ENCODE measurements at regions of chrX and their contacts with region 1.

Region 1: DNA sequence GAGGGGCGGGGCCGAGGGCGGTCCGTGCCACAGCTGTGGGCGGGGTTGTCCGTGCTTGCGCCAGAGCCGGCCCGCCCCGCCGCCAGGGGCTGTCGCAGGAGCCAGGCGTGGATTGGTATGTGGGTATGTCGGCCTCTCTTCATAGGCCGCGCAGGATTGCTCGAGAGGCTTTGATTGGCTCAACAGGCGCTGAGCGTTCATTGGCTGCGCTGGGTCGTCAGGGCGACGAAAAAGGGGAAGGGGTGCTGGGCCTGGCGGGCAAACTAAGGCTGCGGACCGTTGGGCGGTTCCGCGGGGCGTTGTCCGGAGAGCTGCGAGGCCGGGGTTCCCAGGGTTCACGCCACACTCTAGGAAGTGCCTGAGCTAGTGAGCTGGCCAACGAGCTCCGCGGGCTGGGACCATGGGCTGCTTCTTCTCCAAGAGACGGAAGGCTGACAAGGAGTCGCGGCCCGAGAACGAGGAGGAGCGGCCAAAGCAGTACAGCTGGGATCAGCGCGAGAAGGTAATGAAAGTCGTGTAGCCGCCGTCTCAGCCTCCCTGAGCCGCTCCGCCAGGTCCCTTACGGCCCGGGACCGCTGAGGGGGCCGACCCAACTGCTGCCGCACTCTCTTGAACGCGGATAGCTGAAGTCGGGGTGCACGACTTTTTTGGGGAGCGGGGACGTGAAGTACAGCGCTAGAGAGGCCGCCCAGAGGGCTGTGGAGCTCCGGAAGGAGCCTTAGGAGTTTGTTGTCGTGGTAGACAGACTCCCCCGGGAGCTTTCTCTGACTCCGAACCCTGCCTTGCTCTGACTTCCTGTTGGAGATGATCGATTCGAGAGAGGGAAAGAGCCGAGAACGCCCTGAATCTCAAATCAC is at the start of gene RP2:
- DNase-seq: peak; percentile 95
- total RNA-seq, gene RP2: 3.4 TPM

Region 2: GRCh38 chrX:46642145-46642544 is 194.8 kb before region 1 on chrX:
- intact Hi-C with region 1: no loop called
- DNase-seq: no peak

Region 3: DNA sequence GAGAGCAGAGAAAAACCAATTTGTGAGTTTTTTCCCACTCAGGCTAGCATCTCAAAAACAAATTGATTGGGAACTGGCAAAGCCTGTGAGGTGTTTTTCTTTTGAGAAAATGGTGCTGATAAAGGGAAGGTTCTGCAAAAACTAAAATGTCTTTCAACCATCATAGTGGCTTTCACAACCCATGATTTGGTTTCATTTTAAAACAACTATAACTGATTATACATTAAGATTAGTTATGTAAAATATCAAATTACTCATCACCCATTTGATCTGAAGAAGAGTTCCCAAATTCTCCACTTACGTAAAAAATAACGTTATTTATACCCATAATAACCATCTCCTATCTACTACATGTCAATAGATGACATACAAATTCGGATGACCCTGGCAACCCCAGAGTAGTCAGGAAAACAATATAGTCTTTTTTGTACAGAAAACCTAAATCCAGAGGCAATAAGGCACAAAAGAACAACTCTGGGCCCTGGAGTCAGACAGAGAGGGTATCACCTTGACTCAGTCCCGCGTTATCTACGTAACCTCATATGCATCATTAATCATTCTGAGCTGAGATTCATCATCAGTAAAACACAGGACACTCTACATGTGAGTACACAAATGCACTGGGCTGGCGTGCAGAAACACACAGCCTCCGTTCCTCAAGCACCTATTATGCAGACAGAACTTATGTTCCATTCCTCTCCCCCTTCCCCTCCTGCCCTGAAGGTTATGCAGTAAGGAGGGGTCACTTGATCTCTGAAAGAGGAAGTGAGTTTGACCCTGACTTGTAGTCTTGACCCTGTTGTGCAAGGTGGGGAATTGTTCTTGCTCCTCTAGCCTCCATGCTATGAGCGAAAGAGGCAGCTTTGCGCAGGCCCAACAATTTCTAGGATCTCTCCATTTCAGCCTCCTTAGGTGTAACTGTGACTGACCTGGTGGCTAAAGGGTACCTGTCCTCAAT is 160.3 kb before region 1 on chrX:
- intact Hi-C with region 1: no loop called
- DNase-seq: no peak

Region 4: DNA sequence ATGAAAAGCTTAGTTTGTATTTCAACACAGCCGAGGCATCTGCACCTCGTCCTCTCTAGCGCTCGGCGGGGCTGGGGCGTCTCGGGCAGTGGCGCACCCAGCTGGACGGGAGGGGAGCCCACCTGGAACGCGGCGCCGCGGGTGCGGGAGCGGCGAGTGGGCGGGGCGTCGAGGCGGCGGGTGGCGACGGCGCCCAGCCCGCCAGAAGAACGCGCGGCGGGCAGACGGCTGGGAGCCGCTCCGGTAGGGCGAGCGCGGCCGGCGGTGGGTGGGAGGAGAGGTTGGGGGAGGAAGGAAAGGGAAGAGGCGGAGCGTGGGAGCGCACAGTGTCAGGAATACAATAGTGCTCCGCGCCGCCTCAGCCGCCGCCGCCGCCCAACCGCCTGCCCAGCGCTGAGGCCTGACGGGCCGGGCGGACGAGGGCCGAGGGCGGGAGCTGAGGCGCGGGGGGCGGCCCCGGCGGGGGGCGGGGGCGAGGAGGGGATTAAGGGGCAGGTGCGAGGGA is 75.2 kb after region 1 on chrX and contains the start of gene JADE3:
- intact Hi-C with region 1: loop called (anchors 10 kb)
- DNase-seq: peak; percentile 89
- total RNA-seq, gene JADE3: 6.7 TPM

Region 5: GRCh38 chrX:46967547-46967946 is 130.6 kb after region 1 on chrX:
- intact Hi-C with region 1: no loop called
- DNase-seq: no peak